Mammary epithelial cell (primary cell): ENCODE measurements at regions of chr16 and their contacts with region 1.

Region 1: DNA sequence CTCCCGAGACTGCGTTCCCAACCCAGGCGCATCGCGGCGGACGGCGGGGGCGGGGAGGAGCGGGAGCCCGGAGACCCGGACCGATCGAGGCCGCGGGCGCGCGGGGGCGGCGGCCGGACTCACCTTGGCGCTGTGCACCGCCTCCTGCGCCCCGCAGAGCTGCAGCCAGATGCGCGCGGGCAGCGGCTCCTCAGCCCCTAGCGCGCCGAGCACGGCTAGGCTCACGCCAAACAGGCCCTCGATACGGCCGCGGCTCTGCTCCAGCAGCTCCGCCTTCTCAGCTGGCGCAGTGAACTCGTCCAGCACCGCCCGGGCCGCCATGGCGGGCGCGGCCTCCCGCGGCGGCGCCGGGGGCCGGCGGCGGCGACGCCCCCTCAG is 339 bp downstream of the N4BP1 start:
- DNase-seq: peak; percentile 50
- H3K4me3 ChIP-seq: peak overlapping the region; percentile 77 to 98 (median 91)
- H3K27ac ChIP-seq: peak overlapping the region; percentile 95
- H3K4me1 ChIP-seq: peaks cover 61% of the 10 kb centered on the region
- H3K27me3 ChIP-seq: no peaks in the 10 kb centered on the region
- CTCF ChIP-seq: no peak

Region 2: GRCh38 chr16:48526058-48526957 is 83.3 kb before region 1 on chr16:
- CTCF ChIA-PET with region 1: no interaction called
- dilution Hi-C with region 1: no loop called
- in situ Hi-C with region 1: no loop called
- intact Hi-C with region 1: no loop called
- DNase-seq: peak; percentile 75
- H3K4me3 ChIP-seq: no peak overlapping the region
- H3K27ac ChIP-seq: peak overlapping the region; percentile 9
- H3K4me1 ChIP-seq: peaks cover 5% of the 10 kb centered on the region
- H3K27me3 ChIP-seq: no peaks in the 10 kb centered on the region
- CTCF ChIP-seq: peak; percentile 54 to 81

Region 3: DNA sequence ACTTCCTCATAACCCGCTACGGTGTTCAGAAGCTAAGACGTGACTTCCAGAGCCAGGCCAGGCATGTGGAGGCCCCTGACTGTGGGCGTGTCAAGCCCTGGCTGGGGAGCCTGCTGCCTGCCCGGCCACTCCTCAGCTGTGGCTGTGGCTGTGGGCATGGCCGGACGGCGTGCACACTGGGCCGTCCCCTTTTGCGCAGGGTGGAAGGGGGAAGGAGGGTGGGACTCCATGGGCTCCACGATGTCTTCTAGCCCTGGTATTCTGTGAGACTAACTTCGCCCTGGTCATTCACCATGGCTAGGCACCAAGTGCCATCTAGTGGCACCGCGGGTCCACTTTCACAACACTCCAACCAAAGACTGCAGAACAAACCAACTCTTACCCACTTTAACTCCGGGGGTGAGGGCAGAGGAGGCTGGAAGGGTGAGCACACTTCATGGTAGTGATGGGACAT is 67.6 kb before region 1 on chr16:
- CTCF ChIA-PET with region 1: no interaction called
- dilution Hi-C with region 1: no loop called
- in situ Hi-C with region 1: loop called in 1 of 2 experiments (anchors 10 kb)
- intact Hi-C with region 1: no loop called
- DNase-seq: peak; percentile 46
- H3K4me3 ChIP-seq: no peak overlapping the region
- H3K27ac ChIP-seq: no peak overlapping the region
- H3K4me1 ChIP-seq: peaks cover 15% of the 10 kb centered on the region
- H3K27me3 ChIP-seq: no peaks in the 10 kb centered on the region
- CTCF ChIP-seq: peak; percentile 57 to 71

Region 4: GRCh38 chr16:48556913-48557351 is 52.7 kb before region 1 on chr16:
- CTCF ChIA-PET with region 1: no interaction called
- dilution Hi-C with region 1: no loop called
- in situ Hi-C with region 1: no loop called
- intact Hi-C with region 1: loop called (anchors 2 kb)
- DNase-seq: peak; percentile 60
- H3K4me3 ChIP-seq: no peak overlapping the region
- H3K27ac ChIP-seq: no peak overlapping the region
- H3K4me1 ChIP-seq: peaks cover 24% of the 10 kb centered on the region
- H3K27me3 ChIP-seq: no peaks in the 10 kb centered on the region
- CTCF ChIP-seq: no peak

Region 5: GRCh38 chr16:48583075-48584065 is 26.3 kb before region 1 on chr16:
- CTCF ChIA-PET with region 1: no interaction called
- dilution Hi-C with region 1: no loop called
- in situ Hi-C with region 1: no loop called
- intact Hi-C with region 1: loop called (anchors 2 kb)
- DNase-seq: no peak
- H3K4me3 ChIP-seq: no peak overlapping the region
- H3K27ac ChIP-seq: peak overlapping the region; percentile 57
- H3K4me1 ChIP-seq: peaks cover 25% of the 10 kb centered on the region
- H3K27me3 ChIP-seq: no peaks in the 10 kb centered on the region
- CTCF ChIP-seq: no peak

Region 6: GRCh38 chr16:48676836-48677235 is 67.2 kb after region 1 on chr16:
- CTCF ChIA-PET with region 1: no interaction called
- dilution Hi-C with region 1: no loop called
- in situ Hi-C with region 1: no loop called
- intact Hi-C with region 1: no loop called
- DNase-seq: peak; percentile 40
- H3K4me3 ChIP-seq: no peak overlapping the region
- H3K27ac ChIP-seq: no peak overlapping the region
- H3K4me1 ChIP-seq: no peaks in the 10 kb centered on the region
- H3K27me3 ChIP-seq: peaks cover 2% of the 10 kb centered on the region
- CTCF ChIP-seq: no peak